ENCODE measurements at regions of chr1 and their contacts with region 1.

Region 1: DNA sequence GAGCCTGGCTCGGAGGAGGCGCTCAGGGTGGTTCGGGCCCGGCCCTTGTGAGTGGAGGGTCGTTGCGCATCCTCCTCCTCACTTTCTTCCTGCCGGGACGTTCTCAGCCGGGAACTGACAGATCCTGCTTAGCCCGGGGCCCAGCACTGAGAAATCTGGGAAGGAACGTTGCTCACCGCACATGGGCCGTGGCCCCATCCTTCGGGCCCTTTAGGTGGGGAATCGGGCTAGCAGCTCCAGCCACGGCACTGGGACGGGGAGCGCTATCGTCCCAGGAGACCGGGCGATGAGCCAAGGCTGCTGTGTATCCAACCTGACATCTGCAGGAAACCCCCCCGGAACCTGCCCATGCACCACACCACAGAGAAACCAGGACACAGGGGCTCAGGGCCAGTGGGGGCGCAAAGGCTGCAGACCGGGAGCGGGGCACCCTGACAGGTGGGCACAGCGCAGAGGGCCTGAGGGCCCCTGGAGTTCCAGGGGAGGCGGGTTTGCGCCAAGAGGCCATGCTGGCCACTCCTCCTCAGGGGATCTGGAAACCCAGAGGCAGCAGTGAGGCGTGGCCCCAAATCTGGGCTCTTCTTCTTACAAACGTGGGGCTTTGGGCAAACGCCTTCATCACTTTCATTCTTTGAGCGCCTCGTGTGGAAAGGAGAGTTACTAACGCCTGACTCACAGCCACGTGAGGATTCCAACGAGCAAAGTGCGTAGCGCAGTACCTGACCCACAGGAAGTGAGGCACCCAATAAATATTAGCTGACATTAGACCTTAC is at the start of gene SH2D5:
- DNase-seq: peak; percentile 68 to 94
- H3K4me3 ChIP-seq: peak within 1 kb of the TSS; percentile 70 to 85
- H3K27ac ChIP-seq: peak within 1 kb of the TSS; percentile 66 to 85
- H3K4me1 ChIP-seq: peaks cover 7 to 19% of the 10 kb centered on the region in 2 donors
- H3K27me3 ChIP-seq: peaks cover 5% of the 10 kb centered on the region
- CTCF ChIP-seq: peak; percentile 19 to 38 (median 27)
- total RNA-seq, gene SH2D5: not detected

Region 2: DNA sequence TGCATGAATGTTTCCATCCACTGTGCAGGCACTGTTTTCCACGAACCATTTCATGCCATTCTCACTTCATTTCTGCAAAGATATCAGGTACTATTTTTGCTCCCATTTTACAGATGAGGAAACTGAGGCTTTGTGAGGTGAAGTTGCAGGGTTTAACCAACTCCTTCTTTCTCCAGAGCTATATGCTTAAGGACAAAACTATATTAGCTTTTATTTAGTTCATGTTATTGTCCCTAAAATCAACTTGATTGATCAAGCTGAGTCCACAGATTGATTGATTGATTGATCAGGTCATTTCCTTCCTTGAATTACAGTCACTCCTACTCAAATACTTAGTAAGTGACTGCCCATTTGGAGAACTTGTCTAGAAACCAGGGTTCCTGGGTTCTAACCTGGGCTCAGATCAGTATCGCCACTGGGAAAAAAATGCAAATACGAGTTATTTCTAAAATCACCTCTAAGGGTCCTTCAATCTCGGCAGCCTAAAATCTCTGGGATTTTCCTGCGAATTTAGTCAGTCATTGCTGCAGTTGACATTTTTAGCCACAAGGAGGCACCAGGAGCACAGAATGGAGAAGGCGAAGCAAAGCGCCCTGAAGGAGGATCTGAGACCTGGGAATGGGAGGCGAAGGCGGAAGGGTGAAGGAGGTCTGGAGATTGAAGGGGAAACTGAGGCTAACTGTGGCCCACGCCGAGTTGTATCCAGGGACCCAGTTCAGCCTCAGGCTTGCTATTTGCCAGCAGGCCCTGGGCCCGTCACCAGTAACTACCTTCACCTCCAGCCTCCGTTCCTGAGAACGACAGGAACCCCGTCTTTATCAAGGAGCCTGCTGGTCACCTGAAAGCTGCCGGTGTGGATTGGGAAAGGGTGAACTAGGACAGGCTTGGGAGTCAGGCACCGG is 210.6 kb before region 1 on chr1:
- intact Hi-C with region 1: loop called (anchors 10 kb)
- DNase-seq: peak in 1 of 2 donors; percentile 89
- H3K4me3 ChIP-seq: peak overlapping the region; percentile 3 to 30
- H3K27ac ChIP-seq: no peak overlapping the region
- H3K4me1 ChIP-seq: no peaks in the 10 kb centered on the region
- H3K27me3 ChIP-seq: no peaks in the 10 kb centered on the region
- CTCF ChIP-seq: peak; percentile 90 to 94 (median 93)

Region 3: GRCh38 chr1:20661207-20662109 is 71.3 kb before region 1 on chr1 and contains the start of gene DDOST:
- intact Hi-C with region 1: loop called (anchors 1 kb)
- DNase-seq: peak; percentile 82 to 98
- H3K4me3 ChIP-seq: peak within 1 kb of the TSS; percentile 83 to 87
- H3K27ac ChIP-seq: peak within 1 kb of the TSS; percentile 89 to 90
- H3K4me1 ChIP-seq: peaks cover 6 to 18% of the 10 kb centered on the region in 2 donors
- H3K27me3 ChIP-seq: no peaks in the 10 kb centered on the region
- CTCF ChIP-seq: peak in 2 of 3 experiments; percentile 47 to 48
- total RNA-seq, gene DDOST: 142 TPM

Region 4: GRCh38 chr1:20696397-20697329 is 36.1 kb before region 1 on chr1:
- intact Hi-C with region 1: loop called (anchors 1 kb)
- DNase-seq: peak; percentile 46 to 91
- H3K4me3 ChIP-seq: peak overlapping the region; percentile 67 to 76
- H3K27ac ChIP-seq: peak overlapping the region; percentile 74 to 84
- H3K4me1 ChIP-seq: peaks cover 0 to 2% of the 10 kb centered on the region in 2 donors
- H3K27me3 ChIP-seq: no peaks in the 10 kb centered on the region
- CTCF ChIP-seq: peak; percentile 75 to 91 (median 78)

Region 5: DNA sequence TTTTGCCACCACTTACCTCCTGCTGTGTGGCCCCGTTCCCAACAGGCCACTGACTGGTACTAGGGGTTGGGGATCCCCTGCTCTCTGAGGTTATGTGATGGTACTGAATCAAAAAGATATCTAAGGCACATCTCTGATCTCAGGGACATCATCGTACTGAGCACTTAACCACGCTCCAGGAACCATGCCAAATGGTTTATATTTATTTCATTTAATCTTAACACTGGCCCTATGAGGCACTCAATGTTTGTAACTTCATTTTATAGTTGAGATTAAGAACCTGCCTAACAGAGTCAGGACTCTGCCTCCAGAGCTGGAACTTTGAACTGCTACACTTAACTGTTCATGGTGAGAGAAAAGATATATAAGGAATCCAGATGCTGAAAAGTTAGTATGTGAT is 152.3 kb after region 1 on chr1:
- intact Hi-C with region 1: no loop called
- DNase-seq: no peak
- H3K4me3 ChIP-seq: no peak overlapping the region
- H3K27ac ChIP-seq: no peak overlapping the region
- H3K4me1 ChIP-seq: no peaks in the 10 kb centered on the region
- H3K27me3 ChIP-seq: no peaks in the 10 kb centered on the region
- CTCF ChIP-seq: no peak

Region 6: GRCh38 chr1:21344750-21345443 is 612.1 kb after region 1 on chr1:
- intact Hi-C with region 1: loop called (anchors 5 kb)
- DNase-seq: no peak
- H3K4me3 ChIP-seq: peak overlapping the region; percentile 90 to 93
- H3K27ac ChIP-seq: peak overlapping the region; percentile 95 to 97
- H3K4me1 ChIP-seq: peaks cover 17 to 27% of the 10 kb centered on the region in 2 donors
- H3K27me3 ChIP-seq: no peaks in the 10 kb centered on the region
- CTCF ChIP-seq: no peak